HCT116 (cell line): ENCODE measurements at regions of chr2 and their contacts with region 1.

Region 1: GRCh38 chr2:102520028-102520427 is 47.0 kb downstream of the SLC9A4 start:
- DNase-seq: peak; percentile 36
- ATAC-seq: peak; percentile 94
- H3K4me3 ChIP-seq: no peak overlapping the region
- H3K27ac ChIP-seq: no peak overlapping the region
- H3K4me1 ChIP-seq: no peaks in the 10 kb centered on the region
- H3K27me3 ChIP-seq: no peaks in the 10 kb centered on the region
- CTCF ChIP-seq: peak; percentile 57 to 87 (median 75); a peak in 5 of 6 replicates
- POLR2A ChIP-seq: no peak
- RAD21 ChIP-seq: peak; percentile 70

Region 2: GRCh38 chr2:102615622-102616436 is 95.8 kb after region 1 on chr2:
- CTCF ChIA-PET with region 1: interaction called, 4 read pairs
- POLR2A ChIA-PET with region 1: no interaction called
- RAD21 ChIA-PET with region 1: no interaction called
- intact Hi-C with region 1: loop called (anchors 5 kb)
- DNase-seq: peak; percentile 35
- ATAC-seq: peak; percentile 78
- H3K4me3 ChIP-seq: no peak overlapping the region
- H3K27ac ChIP-seq: no peak overlapping the region
- H3K4me1 ChIP-seq: peaks cover 8 to 15% of the 10 kb centered on the region in 2 experiments; a peak in 2 of 4 replicates
- H3K27me3 ChIP-seq: no peaks in the 10 kb centered on the region
- CTCF ChIP-seq: peak; percentile 81 to 97 (median 92)
- POLR2A ChIP-seq: no peak
- RAD21 ChIP-seq: peak; percentile 75

Region 3: GRCh38 chr2:102703748-102704147 is 183.7 kb after region 1 on chr2:
- CTCF ChIA-PET with region 1: no interaction called
- POLR2A ChIA-PET with region 1: no interaction called
- RAD21 ChIA-PET with region 1: no interaction called
- intact Hi-C with region 1: loop called (anchors 5 kb)
- DNase-seq: peak; percentile 23
- ATAC-seq: peak; percentile 89
- H3K4me3 ChIP-seq: no peak overlapping the region
- H3K27ac ChIP-seq: no peak overlapping the region
- H3K4me1 ChIP-seq: peaks cover 5 to 7% of the 10 kb centered on the region in 2 experiments
- H3K27me3 ChIP-seq: no peaks in the 10 kb centered on the region
- CTCF ChIP-seq: peak; percentile 31 to 57 (median 49); a peak in 4 of 6 replicates
- POLR2A ChIP-seq: no peak
- RAD21 ChIP-seq: peak; percentile 76